ENCODE measurements at regions of chr20 and their contacts with region 1.

Region 1: GRCh38 chr20:5448449-5449118 is 131.8 kb upstream of the PROKR2 start:
- DNase-seq: peak; percentile 49
- H3K4me3 ChIP-seq: no peak overlapping the region
- H3K27ac ChIP-seq: no peak overlapping the region
- H3K4me1 ChIP-seq: no peaks in the 10 kb centered on the region
- H3K27me3 ChIP-seq: peaks cover 3 to 13% of the 10 kb centered on the region in 2 experiments
- CTCF ChIP-seq: peak; percentile 61 to 65
- POLR2A ChIP-seq: no peak

Region 2: DNA sequence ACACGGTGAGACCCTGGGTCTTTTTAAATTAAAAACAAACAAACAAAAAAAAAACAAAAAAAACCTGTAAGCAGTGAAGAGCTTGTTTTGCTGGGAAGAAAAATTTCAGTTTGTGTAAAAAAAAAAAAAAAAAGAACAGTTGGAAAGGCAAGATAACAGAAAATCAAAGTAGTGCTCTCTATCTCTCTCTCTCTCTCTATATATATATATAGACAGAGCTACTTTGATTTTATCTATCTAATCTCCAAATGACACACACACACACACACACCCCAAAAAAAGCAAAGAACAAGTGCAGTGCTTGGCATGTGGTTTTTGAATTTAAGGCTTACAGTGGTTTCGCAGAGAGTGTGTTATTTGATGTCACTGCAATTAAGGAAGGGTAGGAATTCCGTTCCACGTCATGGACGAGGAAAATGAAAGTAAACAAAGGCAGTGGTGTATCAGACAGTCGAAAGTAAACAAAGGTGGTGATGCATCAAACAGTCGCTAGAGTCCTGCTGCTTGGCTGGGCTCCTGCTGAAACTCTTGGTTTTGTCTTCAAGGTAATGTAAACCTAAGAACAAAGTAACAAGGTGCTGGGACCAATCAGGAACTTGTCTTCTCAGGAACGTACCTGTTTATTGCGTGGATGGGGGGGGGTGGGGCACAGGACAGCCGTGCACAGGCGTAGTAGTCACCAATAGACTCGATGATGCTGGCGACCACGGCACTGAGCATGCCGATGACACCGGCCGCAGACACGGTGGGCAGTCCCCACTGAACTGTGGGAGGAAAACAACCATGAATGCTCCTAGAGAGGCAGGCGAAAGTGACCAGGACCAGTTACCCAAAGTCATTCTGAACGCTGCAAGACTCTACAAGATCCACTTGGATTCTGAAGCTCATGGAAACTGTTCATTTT is 579.0 kb before region 1 on chr20:
- CTCF ChIA-PET with region 1: no interaction called
- POLR2A ChIA-PET with region 1: no interaction called
- dilution Hi-C with region 1: no loop called
- intact Hi-C with region 1: no loop called
- DNase-seq: no peak
- H3K4me3 ChIP-seq: no peak overlapping the region
- H3K27ac ChIP-seq: no peak overlapping the region
- H3K4me1 ChIP-seq: no peaks in the 10 kb centered on the region
- H3K27me3 ChIP-seq: no peaks in the 10 kb centered on the region
- CTCF ChIP-seq: no peak
- POLR2A ChIP-seq: no peak

Region 3: GRCh38 chr20:5205348-5206210 is 243.0 kb before region 1 on chr20:
- CTCF ChIA-PET with region 1: interaction called, 228 read pairs
- POLR2A ChIA-PET with region 1: interaction called, 5 read pairs
- dilution Hi-C with region 1: no loop called
- intact Hi-C with region 1: loop called (anchors 1 kb)
- DNase-seq: peak; percentile 78
- H3K4me3 ChIP-seq: no peak overlapping the region
- H3K27ac ChIP-seq: no peak overlapping the region
- H3K4me1 ChIP-seq: no peaks in the 10 kb centered on the region
- H3K27me3 ChIP-seq: no peaks in the 10 kb centered on the region
- CTCF ChIP-seq: peak; percentile 93
- POLR2A ChIP-seq: no peak

Region 4: DNA sequence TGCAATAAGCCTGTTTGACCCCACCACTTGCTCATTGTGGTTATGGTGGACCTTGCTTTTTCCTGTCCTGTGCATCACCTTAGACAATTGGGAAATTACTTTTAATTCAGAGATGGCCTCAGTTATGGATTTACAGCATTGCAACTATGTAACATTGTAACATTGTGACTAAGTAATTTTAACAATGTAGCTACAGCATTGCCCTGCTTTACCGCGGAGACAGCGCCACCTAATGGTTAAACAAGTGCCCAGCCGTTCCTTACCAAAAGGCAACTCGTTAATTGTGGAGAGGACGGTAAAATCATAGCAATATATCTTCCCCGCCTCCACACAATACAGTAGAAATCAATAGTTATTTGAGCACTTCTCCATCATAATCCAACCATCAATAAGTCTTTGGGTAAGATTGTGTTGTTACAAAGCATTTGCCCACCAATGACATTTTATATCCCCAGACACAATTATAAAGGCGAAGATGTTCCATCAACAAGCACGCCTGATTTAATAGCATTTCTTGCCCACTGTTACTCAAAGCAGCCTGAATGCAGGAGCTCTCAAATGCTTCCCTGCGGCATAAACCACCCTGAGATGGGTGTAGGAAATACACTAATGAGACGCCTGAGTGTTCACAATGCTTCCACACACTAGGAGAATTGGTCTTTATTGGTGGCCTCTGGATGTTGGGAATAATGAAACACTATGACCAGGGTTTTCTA is 225.5 kb before region 1 on chr20:
- CTCF ChIA-PET with region 1: interaction called, 31 read pairs
- POLR2A ChIA-PET with region 1: no interaction called
- dilution Hi-C with region 1: no loop called
- intact Hi-C with region 1: loop called (anchors 5 kb)
- DNase-seq: peak; percentile 64
- H3K4me3 ChIP-seq: no peak overlapping the region
- H3K27ac ChIP-seq: no peak overlapping the region
- H3K4me1 ChIP-seq: no peaks in the 10 kb centered on the region
- H3K27me3 ChIP-seq: peaks cover 0 to 3% of the 10 kb centered on the region in 2 experiments
- CTCF ChIP-seq: peak; percentile 84 to 93
- POLR2A ChIP-seq: no peak

Region 5: GRCh38 chr20:5402903-5403531 is 45.6 kb before region 1 on chr20:
- CTCF ChIA-PET with region 1: interaction called, 16 read pairs
- POLR2A ChIA-PET with region 1: no interaction called
- dilution Hi-C with region 1: no loop called
- intact Hi-C with region 1: loop called (anchors 2 kb)
- DNase-seq: peak; percentile 30
- H3K4me3 ChIP-seq: no peak overlapping the region
- H3K27ac ChIP-seq: no peak overlapping the region
- H3K4me1 ChIP-seq: no peaks in the 10 kb centered on the region
- H3K27me3 ChIP-seq: no peaks in the 10 kb centered on the region
- CTCF ChIP-seq: peak; percentile 55 to 81
- POLR2A ChIP-seq: no peak

Region 6: GRCh38 chr20:5463007-5463686 is 14.6 kb after region 1 on chr20:
- CTCF ChIA-PET with region 1: interaction called, 16 read pairs
- POLR2A ChIA-PET with region 1: no interaction called
- dilution Hi-C with region 1: no loop called
- intact Hi-C with region 1: no loop called
- DNase-seq: no peak
- H3K4me3 ChIP-seq: no peak overlapping the region
- H3K27ac ChIP-seq: no peak overlapping the region
- H3K4me1 ChIP-seq: no peaks in the 10 kb centered on the region
- H3K27me3 ChIP-seq: no peaks in the 10 kb centered on the region
- CTCF ChIP-seq: no peak
- POLR2A ChIP-seq: no peak

Region 7: DNA sequence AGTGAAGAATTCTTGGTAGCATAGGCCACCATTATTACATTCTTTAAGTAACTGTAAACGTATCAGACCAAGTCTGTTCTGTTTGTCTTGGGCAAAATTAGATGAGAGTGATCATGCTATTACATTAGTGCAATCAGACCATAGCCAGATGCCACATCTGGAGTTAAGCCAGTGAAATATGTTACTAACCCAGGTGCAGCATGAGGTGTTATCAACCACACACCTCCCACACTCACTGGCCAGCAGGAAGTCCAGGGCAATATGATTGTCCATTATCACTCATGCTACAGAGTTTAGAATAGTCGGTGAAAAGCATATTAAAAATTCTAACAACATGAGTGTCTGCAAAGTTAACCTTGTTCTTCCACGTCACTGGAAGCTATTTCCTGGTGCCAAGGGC is 42.9 kb after region 1 on chr20:
- CTCF ChIA-PET with region 1: no interaction called
- POLR2A ChIA-PET with region 1: no interaction called
- dilution Hi-C with region 1: no loop called
- intact Hi-C with region 1: no loop called
- DNase-seq: no peak
- H3K4me3 ChIP-seq: no peak overlapping the region
- H3K27ac ChIP-seq: no peak overlapping the region
- H3K4me1 ChIP-seq: no peaks in the 10 kb centered on the region
- H3K27me3 ChIP-seq: peaks cover 10 to 11% of the 10 kb centered on the region in 2 experiments
- CTCF ChIP-seq: no peak
- POLR2A ChIP-seq: no peak

Region 8: GRCh38 chr20:6053776-6054688 is 605.4 kb after region 1 on chr20 and contains the start of gene LRRN4:
- CTCF ChIA-PET with region 1: no interaction called
- POLR2A ChIA-PET with region 1: no interaction called
- dilution Hi-C with region 1: no loop called
- intact Hi-C with region 1: no loop called
- DNase-seq: no peak
- H3K4me3 ChIP-seq: no peak within 1 kb of the TSS
- H3K27ac ChIP-seq: no peak within 1 kb of the TSS
- H3K4me1 ChIP-seq: peaks cover 8% of the 10 kb centered on the region
- H3K27me3 ChIP-seq: peaks cover 33 to 36% of the 10 kb centered on the region in 2 experiments
- CTCF ChIP-seq: no peak
- POLR2A ChIP-seq: no peak
- total RNA-seq, gene LRRN4: not detected in 2 replicates

Measured in endothelial cell of umbilical vein (primary cell).